ENCODE measurements at regions of chr9 and their contacts with region 1.

Region 1: GRCh38 chr9:119556129-119556875 is 187.1 kb upstream of the BRINP1 start:
- DNase-seq: peak; percentile 72 to 80
- H3K4me3 ChIP-seq: peak overlapping the region in 1 of 3 donors; percentile 10
- H3K27ac ChIP-seq: peak overlapping the region in 1 of 3 donors; percentile 35
- H3K4me1 ChIP-seq: peaks cover 0 to 11% of the 10 kb centered on the region in 2 donors
- H3K27me3 ChIP-seq: no peaks in the 10 kb centered on the region
- CTCF ChIP-seq: peak; percentile 85 to 96 (median 89)
- POLR2A ChIP-seq: no peak

Region 2: GRCh38 chr9:119968836-119969707 is 412.8 kb after region 1 on chr9:
- intact Hi-C with region 1: loop called (anchors 5 kb)
- DNase-seq: peak; percentile 78 to 85
- H3K4me3 ChIP-seq: no peak overlapping the region
- H3K27ac ChIP-seq: no peak overlapping the region
- H3K4me1 ChIP-seq: peaks cover 5 to 7% of the 10 kb centered on the region in 2 donors
- H3K27me3 ChIP-seq: no peaks in the 10 kb centered on the region
- CTCF ChIP-seq: peak; percentile 78 to 93 (median 84)
- POLR2A ChIP-seq: no peak